Activated B cell treated with CpG ODN at 0.5 μM for 24 hours (primary cell): ENCODE measurements at regions of chr15 and their contacts with region 1.

Region 1: DNA sequence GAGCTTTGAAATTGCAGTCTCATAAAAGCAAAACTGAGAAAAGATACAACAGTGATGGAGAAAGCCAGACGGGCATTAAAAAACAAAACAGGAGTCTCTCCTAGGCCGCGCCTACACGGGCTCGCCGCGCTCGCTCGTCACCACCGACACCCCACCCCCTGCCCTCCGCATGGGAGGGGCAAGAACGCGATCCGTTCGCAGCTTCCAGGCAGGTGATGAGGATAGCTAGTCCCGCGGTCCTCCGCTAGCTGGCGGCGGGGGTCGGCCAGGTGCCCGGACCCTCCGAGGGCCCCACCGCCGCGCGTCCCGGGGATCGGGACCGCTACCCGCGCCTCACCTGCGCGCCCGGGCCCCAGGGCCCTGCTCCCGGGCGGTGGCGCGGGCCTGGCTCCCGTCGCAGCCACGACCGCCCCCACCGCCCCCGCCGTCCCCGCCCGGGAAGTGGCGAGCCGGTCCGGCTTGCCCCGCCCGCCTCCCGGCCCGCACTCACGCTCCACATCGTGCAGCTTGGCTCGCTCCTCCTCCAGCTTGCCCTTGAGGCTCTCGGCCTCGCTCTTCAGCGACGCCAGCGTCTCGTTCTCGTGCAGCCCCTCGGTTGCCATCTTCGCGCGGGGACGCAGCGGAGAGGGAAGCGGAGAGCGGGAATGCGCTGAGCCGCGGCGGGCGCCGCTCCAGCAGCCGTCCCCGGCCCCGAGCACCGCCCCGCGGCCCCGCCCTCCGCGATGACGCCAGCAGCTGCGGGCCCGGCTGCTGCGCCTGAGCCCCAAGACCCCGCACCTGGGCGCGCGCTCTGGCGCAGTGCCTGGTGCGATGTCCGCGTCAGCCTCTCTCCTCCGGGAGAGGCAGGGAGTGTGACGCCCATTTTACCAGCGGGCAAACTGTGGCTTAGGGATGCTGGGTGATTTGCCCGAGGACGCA is 11.7 kb downstream of the GNB5 start:
- DNase-seq: peak; percentile 95
- ATAC-seq: peak; percentile 80
- H3K4me3 Mint-ChIP-seq: peak overlapping the region; percentile 98
- H3K27ac Mint-ChIP-seq: peak overlapping the region; percentile 99
- H3K4me1 Mint-ChIP-seq: peaks cover 58% of the 10 kb centered on the region
- H3K27me3 Mint-ChIP-seq: no peaks in the 10 kb centered on the region
- CTCF ChIP-seq: no peak

Region 2: DNA sequence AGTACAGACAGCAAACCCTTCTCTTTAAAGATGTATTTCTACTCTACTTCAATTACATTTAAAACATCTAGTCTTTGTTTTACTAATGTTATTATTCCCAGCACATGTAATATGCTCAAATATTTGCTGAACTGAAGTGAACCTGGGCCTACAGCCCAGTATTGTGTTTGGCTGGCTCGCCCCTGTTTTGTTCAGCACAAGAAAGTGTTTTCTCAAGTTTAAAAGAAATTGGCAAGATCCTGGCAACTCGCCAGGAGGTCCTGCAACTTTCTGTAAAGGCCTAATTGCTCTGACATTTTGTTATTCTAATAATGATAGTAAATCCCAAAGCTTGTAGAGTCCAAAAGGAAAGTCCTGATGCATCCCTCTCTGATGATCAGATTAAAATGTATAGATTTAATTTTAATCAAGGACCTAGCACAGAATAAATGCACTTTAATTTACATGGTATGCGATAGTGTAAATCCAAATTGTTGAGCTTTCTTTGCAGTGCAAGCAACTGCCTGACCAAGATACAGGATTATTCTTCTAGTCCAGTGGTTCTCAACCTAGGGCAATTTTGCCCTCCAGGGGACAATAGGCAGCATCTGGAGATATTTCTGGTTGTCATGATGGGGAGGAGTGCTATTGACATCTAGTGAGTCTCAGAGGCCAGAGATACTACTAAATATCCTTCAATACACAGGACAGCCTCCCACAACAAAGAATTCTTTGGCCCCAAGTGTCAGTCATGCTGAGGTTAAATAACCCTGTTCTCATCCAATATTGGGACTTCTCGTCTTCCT is 385.8 kb before region 1 on chr15:
- CTCF ChIA-PET with region 1: no interaction called
- POLR2A ChIA-PET with region 1: no interaction called
- intact Hi-C with region 1: no loop called
- DNase-seq: no peak
- ATAC-seq: no peak
- H3K4me3 Mint-ChIP-seq: no peak overlapping the region
- H3K27ac Mint-ChIP-seq: no peak overlapping the region
- H3K4me1 Mint-ChIP-seq: no peaks in the 10 kb centered on the region
- H3K27me3 Mint-ChIP-seq: no peaks in the 10 kb centered on the region
- CTCF ChIP-seq: no peak

Region 3: DNA sequence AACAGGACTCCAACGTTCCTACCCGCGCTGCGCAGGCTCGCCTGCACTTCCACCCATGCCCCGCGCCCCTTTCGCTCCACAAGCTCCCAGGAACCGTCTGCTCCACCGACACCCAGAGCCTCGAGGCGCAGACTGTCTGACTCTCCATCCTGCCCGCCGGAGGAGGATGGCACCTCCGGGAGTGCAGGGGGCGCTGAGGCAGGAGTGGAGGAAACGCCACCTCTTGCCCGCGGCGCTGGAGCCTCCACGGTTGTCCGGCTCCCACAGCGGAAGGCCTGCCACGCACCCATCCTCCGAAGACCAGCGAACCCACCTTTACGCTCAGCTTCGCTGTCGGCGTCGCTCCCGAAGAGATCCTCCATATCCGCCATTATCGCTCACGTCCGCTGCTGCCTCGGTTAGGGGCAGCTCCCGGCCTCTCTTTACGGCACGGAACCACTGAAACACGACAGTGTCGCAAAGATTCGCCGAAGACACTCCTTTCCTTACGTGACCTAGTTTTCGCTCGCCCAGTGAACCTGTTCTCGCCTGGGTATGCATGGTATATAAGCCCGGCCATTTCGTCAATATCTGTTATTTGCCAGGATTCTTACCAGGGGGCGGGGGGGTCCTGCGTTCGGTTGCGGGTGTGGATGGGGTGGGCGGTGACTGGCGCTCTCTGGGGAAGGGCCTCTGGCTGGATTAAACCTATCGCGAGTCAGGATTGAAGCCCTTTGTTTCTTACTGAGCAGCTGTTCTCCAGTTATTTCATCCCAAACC is 208.0 kb before region 1 on chr15 and contains the start of gene LEO1:
- CTCF ChIA-PET with region 1: no interaction called
- POLR2A ChIA-PET with region 1: interaction called, 12 read pairs
- intact Hi-C with region 1: loop called (anchors 1 kb)
- DNase-seq: peak; percentile 69
- ATAC-seq: peak; percentile 96
- H3K4me3 Mint-ChIP-seq: peak within 1 kb of the TSS; percentile 100
- H3K27ac Mint-ChIP-seq: peak within 1 kb of the TSS; percentile 99
- H3K4me1 Mint-ChIP-seq: peaks cover 21% of the 10 kb centered on the region
- H3K27me3 Mint-ChIP-seq: no peaks in the 10 kb centered on the region
- CTCF ChIP-seq: no peak
- total RNA-seq, gene LEO1: 18.3 and 19.1 TPM in 2 replicates

Region 4: GRCh38 chr15:52148403-52148802 is 31.1 kb before region 1 on chr15:
- CTCF ChIA-PET with region 1: no interaction called
- POLR2A ChIA-PET with region 1: no interaction called
- intact Hi-C with region 1: no loop called
- DNase-seq: no peak
- ATAC-seq: no peak
- H3K4me3 Mint-ChIP-seq: no peak overlapping the region
- H3K27ac Mint-ChIP-seq: no peak overlapping the region
- H3K4me1 Mint-ChIP-seq: peaks cover 14% of the 10 kb centered on the region
- H3K27me3 Mint-ChIP-seq: no peaks in the 10 kb centered on the region
- CTCF ChIP-seq: no peak

Region 5: DNA sequence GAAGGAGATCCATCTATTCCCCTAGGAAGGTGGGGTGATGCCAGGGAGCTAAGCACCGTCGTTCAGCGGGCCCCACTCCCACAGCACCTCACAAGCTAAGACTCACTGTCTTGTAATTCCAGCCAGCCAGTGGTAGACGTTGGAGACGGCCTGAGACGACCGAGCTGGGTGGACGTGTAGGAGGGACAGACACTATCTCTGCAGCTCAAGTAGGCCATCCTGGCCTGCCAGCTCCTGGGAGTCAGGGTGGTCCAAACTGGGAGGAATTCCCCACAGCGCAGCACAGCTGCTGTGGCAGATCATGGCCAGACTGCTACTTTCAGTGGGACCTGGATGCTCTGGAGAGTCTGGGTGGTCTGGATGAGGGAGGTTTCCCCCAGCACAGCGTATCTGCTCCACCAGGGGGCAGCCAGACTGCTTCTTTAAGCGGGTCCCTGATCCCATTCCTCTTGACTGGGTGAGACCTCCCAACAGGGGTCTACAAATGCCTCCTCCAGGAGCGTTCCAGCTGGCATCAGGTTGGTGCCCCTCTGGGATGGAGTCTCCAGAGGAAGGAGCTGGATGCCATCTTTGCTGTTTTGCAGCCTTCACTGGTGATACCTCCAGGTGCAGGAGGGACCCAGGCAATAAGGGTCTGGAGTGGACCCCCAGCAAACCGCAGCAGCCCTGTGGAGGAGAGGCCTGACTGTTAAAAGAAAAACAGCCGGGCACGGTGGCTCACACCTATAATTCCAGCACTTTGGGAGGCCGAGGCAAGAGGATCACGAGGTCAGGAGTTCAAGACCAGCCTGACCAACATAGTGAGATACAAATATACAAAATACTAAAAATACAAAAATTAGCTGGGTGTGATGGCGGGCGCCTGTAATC is 16.0 kb before region 1 on chr15:
- CTCF ChIA-PET with region 1: interaction called, 6 read pairs
- POLR2A ChIA-PET with region 1: interaction called, 32 read pairs
- intact Hi-C with region 1: loop called (anchors 2 kb)
- DNase-seq: no peak
- ATAC-seq: peak; percentile 37
- H3K4me3 Mint-ChIP-seq: no peak overlapping the region
- H3K27ac Mint-ChIP-seq: no peak overlapping the region
- H3K4me1 Mint-ChIP-seq: peaks cover 37% of the 10 kb centered on the region
- H3K27me3 Mint-ChIP-seq: no peaks in the 10 kb centered on the region
- CTCF ChIP-seq: no peak

Region 6: GRCh38 chr15:52256366-52256765 is 76.8 kb after region 1 on chr15:
- CTCF ChIA-PET with region 1: interaction called, 5 read pairs
- POLR2A ChIA-PET with region 1: interaction called, 24 read pairs
- intact Hi-C with region 1: loop called (anchors 2 kb)
- DNase-seq: peak; percentile 46
- ATAC-seq: peak; percentile 78
- H3K4me3 Mint-ChIP-seq: peak overlapping the region; percentile 60
- H3K27ac Mint-ChIP-seq: peak overlapping the region; percentile 68
- H3K4me1 Mint-ChIP-seq: peaks cover 48% of the 10 kb centered on the region
- H3K27me3 Mint-ChIP-seq: no peaks in the 10 kb centered on the region
- CTCF ChIP-seq: no peak

Region 7: DNA sequence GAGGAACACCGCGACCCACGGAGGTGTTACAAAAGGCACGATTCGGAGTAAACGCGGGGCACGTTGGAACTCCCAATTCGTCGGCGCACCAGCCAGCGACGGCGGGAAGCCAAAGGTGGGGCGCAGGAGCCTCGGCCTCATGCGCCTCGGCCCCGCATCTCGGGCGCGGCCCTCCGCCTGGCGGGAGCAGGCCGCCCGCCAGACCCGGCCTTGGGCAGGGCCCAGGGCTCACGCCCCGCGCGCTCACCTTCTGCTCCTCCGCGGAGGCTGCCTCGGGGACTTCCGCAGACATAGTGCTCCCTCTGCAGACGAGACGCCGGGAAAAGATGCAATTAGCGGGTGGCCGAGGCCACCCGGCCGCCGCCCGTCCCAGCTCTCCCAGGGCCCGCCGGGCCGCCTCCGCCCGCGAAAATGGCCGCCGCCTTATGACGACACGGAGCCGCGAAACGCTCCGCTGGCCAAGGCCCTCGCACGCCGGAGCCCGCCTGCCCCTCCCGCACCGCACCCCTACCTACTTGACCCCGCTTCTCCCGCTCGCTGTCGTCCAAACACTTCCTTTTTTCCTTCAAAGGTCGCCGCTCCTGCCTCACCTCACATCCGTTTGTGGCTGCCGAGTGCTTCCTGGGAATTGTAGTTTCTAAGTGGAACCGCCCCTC is 389.2 kb after region 1 on chr15 and contains the start of gene ARPP19:
- CTCF ChIA-PET with region 1: no interaction called
- POLR2A ChIA-PET with region 1: interaction called, 3 read pairs
- intact Hi-C with region 1: loop called (anchors 1 kb)
- DNase-seq: peak; percentile 82
- ATAC-seq: peak; percentile 83
- H3K4me3 Mint-ChIP-seq: peak within 1 kb of the TSS; percentile 97
- H3K27ac Mint-ChIP-seq: peak within 1 kb of the TSS; percentile 100
- H3K4me1 Mint-ChIP-seq: peaks cover 49% of the 10 kb centered on the region
- H3K27me3 Mint-ChIP-seq: no peaks in the 10 kb centered on the region
- CTCF ChIP-seq: no peak
- total RNA-seq, gene ARPP19: 145 and 153 TPM in 2 replicates